HEK293 (cell line): ENCODE measurements at regions of chr5 and their contacts with region 1.

Region 1: DNA sequence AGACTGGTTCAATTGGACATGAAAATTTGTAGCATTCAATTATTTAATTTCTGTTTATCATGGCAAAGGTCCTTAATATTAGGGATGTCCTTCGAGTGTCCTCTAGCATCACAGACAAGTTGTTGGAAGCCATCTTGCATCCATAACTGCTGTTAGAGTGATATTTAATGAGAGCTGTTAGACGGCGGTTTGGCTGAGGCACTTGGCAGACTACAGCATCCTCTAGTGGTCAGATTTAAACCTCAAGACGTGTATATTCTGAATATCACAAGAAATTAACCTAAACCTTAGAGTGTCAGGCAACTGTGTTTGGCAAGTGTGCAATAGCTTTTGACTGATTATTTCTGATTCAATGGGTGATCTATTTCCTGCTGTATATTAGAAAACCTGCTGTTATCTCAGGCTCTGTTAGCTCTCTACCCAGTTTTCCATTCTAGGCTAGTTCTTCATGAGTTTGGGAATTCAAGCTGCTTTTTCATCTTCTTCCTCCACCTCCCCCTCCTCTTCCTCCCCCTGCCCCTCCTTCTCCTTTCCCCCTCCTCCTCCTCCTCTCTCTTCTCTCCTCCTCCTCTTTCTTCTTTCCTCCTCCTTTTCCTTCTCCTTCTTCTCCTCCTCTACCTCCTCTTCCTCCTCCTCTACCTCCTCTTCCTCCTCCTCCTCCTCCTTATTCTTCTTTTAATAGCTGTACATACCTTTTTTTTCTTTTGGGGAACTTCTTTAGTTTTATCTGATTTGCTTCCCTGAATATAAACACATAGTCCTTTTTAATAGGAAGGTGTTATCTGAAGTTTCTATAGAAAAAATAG is 8.6 kb downstream of the SPINK1 start:
- H3K4me3 ChIP-seq: no peak overlapping the region
- H3K27ac ChIP-seq: no peak overlapping the region
- H3K4me1 ChIP-seq: no peaks in the 10 kb centered on the region
- CTCF ChIP-seq: peak; percentile 77

Region 2: DNA sequence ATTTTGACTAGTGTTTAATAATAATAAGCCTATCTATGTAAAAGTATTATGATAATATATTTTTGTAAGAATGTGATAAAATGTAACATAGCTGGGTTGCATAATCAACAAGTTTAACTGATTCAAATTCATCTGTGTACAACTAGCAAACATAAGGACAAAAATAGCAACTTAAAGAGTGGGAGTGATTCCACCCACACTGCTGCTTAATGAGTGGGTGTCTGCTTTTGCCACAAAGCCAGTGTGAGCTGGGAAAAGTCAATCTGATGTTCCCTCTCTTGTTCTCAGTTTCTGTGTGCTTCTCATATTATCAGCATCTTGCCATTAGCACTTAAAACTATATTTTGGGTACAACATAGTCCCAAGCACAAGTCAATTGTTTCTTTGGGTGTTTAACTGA is 201.9 kb before region 1 on chr5:
- CTCF ChIA-PET with region 1: interaction called, 25 read pairs
- POLR2A ChIA-PET with region 1: no interaction called
- H3K4me3 ChIP-seq: no peak overlapping the region
- H3K27ac ChIP-seq: no peak overlapping the region
- H3K4me1 ChIP-seq: peaks cover 5% of the 10 kb centered on the region; the same call in 1 of the 2 replicates
- CTCF ChIP-seq: no peak

Region 3: DNA sequence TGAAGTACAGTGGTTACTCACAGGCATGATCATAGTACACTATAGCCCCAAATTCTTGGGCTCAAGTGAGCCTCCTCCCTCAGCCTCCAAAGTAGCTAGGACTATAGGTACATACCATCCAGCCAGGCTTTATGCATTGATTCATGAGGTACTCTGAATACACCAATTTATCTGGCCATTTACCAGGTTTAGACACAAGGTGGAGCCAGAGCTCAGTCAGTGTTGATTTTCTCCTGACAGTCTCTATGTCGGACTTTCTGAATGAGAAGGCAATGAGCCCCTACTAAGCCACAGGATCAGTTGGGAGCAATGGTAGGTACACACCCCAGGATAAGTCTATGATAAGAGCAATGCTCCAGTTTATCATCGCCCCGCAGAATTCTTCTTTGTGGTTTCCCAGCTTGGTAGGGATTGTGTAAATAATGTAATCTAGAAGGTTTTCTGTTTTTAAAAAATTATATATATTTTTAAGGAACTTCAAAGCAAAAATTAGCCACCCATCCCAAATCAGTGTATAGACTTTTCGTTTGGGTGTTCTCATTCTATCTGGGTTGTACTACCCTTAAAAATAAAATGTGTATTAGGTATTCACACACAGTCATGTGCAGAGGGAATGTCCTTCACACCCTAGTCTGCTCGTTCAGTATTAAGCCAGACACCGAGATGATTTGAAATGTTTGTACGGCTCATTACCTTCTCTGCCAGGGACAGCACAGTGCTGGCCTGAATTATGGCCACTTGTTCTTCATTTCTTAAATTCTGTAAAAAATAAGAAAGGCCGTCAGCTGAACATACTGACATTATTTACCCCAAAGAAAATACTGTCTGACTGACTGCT is 194.6 kb before region 1 on chr5:
- CTCF ChIA-PET with region 1: interaction called, 103 read pairs
- POLR2A ChIA-PET with region 1: no interaction called
- H3K4me3 ChIP-seq: no peak overlapping the region
- H3K27ac ChIP-seq: no peak overlapping the region
- H3K4me1 ChIP-seq: no peaks in the 10 kb centered on the region
- CTCF ChIP-seq: peak; percentile 61

Region 4: GRCh38 chr5:147690595-147690994 is 132.3 kb before region 1 on chr5:
- CTCF ChIA-PET with region 1: interaction called, 11 read pairs
- POLR2A ChIA-PET with region 1: no interaction called
- H3K4me3 ChIP-seq: no peak overlapping the region
- H3K27ac ChIP-seq: no peak overlapping the region
- H3K4me1 ChIP-seq: no peaks in the 10 kb centered on the region
- CTCF ChIP-seq: no peak

Region 5: GRCh38 chr5:147809830-147810666 is 12.8 kb before region 1 on chr5:
- CTCF ChIA-PET with region 1: interaction called, 10 read pairs
- POLR2A ChIA-PET with region 1: no interaction called
- H3K4me3 ChIP-seq: no peak overlapping the region
- H3K27ac ChIP-seq: no peak overlapping the region
- H3K4me1 ChIP-seq: no peaks in the 10 kb centered on the region
- CTCF ChIP-seq: no peak